ENCODE measurements at regions of chr10 and their contacts with region 1.

Region 1: GRCh38 chr10:14878266-14879054 is at the start of gene SUV39H2:
- DNase-seq: peak; percentile 99
- H3K4me3 Mint-ChIP-seq: peak within 1 kb of the TSS; percentile 96
- H3K27ac Mint-ChIP-seq: peak within 1 kb of the TSS; percentile 92
- H3K4me1 Mint-ChIP-seq: peaks cover 30% of the 10 kb centered on the region
- H3K27me3 Mint-ChIP-seq: no peaks in the 10 kb centered on the region
- total RNA-seq, gene SUV39H2: 46.7 and 47.5 TPM in 2 replicates

Region 2: GRCh38 chr10:13787015-13787421 is 1091.4 kb before region 1 on chr10:
- intact Hi-C with region 1: loop called (anchors 10 kb)
- DNase-seq: peak; percentile 94
- H3K4me3 Mint-ChIP-seq: peak overlapping the region; percentile 71
- H3K27ac Mint-ChIP-seq: peak overlapping the region; percentile 91
- H3K4me1 Mint-ChIP-seq: peaks cover 29% of the 10 kb centered on the region
- H3K27me3 Mint-ChIP-seq: no peaks in the 10 kb centered on the region

Region 3: GRCh38 chr10:14648005-14648765 is 230.3 kb before region 1 on chr10:
- intact Hi-C with region 1: loop called (anchors 5 kb)
- DNase-seq: peak; percentile 92
- H3K4me3 Mint-ChIP-seq: peak overlapping the region; percentile 70
- H3K27ac Mint-ChIP-seq: peak overlapping the region; percentile 97
- H3K4me1 Mint-ChIP-seq: peaks cover 56% of the 10 kb centered on the region
- H3K27me3 Mint-ChIP-seq: no peaks in the 10 kb centered on the region

Region 4: GRCh38 chr10:14954001-14954770 is 75.7 kb after region 1 on chr10 and contains the start of gene DCLRE1C:
- intact Hi-C with region 1: loop called (anchors 1 kb)
- DNase-seq: peak; percentile 97
- H3K4me3 Mint-ChIP-seq: peak within 1 kb of the TSS; percentile 96
- H3K27ac Mint-ChIP-seq: peak within 1 kb of the TSS; percentile 97
- H3K4me1 Mint-ChIP-seq: peaks cover 45% of the 10 kb centered on the region
- H3K27me3 Mint-ChIP-seq: no peaks in the 10 kb centered on the region
- total RNA-seq, gene DCLRE1C: 17.5 and 21.0 TPM in 2 replicates

Region 5: GRCh38 chr10:15097011-15097812 is 218.8 kb after region 1 on chr10 and contains the start of gene RPP38:
- intact Hi-C with region 1: loop called (anchors 1 kb)
- DNase-seq: peak; percentile 98
- H3K4me3 Mint-ChIP-seq: peak within 1 kb of the TSS; percentile 95
- H3K27ac Mint-ChIP-seq: peak within 1 kb of the TSS; percentile 92
- H3K4me1 Mint-ChIP-seq: peaks cover 20% of the 10 kb centered on the region
- H3K27me3 Mint-ChIP-seq: peaks cover 2% of the 10 kb centered on the region
- total RNA-seq, gene RPP38: 22.6 and 23.3 TPM in 2 replicates

Region 6: DNA sequence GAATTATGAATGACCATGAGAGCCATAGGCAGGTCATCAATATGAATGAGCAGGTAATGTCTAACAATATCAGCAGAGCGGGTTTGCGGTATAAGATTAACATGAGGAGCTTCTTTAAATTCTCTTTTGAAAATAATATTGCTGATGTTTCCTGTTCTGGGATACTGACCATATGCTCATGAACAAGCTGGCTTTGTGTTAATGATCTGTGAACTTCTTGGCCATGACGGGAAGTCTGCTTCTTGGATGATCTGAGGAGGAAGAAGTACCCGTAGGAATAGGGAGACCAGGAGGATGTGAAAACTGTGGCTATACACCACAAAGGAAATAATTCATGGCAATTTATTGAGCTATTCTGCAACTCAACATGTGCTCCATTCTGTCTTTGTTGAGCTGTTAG is 802.6 kb after region 1 on chr10:
- intact Hi-C with region 1: no loop called
- DNase-seq: peak; percentile 17
- H3K4me3 Mint-ChIP-seq: no peak overlapping the region
- H3K27ac Mint-ChIP-seq: no peak overlapping the region
- H3K4me1 Mint-ChIP-seq: no peaks in the 10 kb centered on the region
- H3K27me3 Mint-ChIP-seq: peaks cover 18% of the 10 kb centered on the region

Measured in activated CD4-positive, alpha-beta T cell treated with anti-CD3 and anti-CD28 coated beads, Interleukin-2, amount 10 ng/mL, durations not matched to agents 24 days and 14 days (primary cell).